AG04450 (cell line): ENCODE measurements at regions of chr5 and their contacts with region 1.

Region 1: GRCh38 chr5:98786191-98786853 is 12.9 kb downstream of the RGMB start:
- DNase-seq: no peak
- H3K4me3 ChIP-seq: no peak overlapping the region
- H3K27ac ChIP-seq: no peak overlapping the region
- H3K27me3 ChIP-seq: no peaks in the 10 kb centered on the region
- CTCF ChIP-seq: no peak

Region 2: DNA sequence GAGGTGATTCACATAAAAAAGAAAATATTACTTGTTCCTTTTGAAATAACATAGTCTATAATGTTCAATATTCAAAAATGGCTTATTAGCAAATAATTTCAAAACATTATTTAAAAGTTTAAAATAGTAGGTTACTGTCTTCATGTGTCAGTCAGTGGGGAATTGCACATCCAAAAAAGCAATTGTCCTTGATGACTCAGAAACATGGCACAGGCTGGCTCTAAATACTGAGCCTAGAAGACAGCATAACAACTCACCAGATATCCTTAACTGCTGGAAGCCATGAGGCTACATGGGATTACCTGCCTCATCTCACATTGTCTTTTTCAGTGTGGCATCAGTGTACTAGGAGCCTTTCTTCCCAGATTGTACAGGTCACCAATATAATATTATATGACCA is 452.4 kb before region 1 on chr5:
- CTCF ChIA-PET with region 1: interaction called, 12 read pairs
- POLR2A ChIA-PET with region 1: no interaction called
- DNase-seq: no peak
- H3K4me3 ChIP-seq: no peak overlapping the region
- H3K27ac ChIP-seq: no peak overlapping the region
- H3K27me3 ChIP-seq: no peaks in the 10 kb centered on the region
- CTCF ChIP-seq: no peak

Region 3: GRCh38 chr5:98735806-98736507 is 50.4 kb before region 1 on chr5:
- CTCF ChIA-PET with region 1: no interaction called
- POLR2A ChIA-PET with region 1: no interaction called
- DNase-seq: no peak
- H3K4me3 ChIP-seq: no peak overlapping the region
- H3K27ac ChIP-seq: no peak overlapping the region
- H3K27me3 ChIP-seq: no peaks in the 10 kb centered on the region
- CTCF ChIP-seq: no peak

Region 4: GRCh38 chr5:98905857-98906690 is 119.8 kb after region 1 on chr5:
- CTCF ChIA-PET with region 1: no interaction called
- POLR2A ChIA-PET with region 1: no interaction called
- DNase-seq: no peak
- H3K4me3 ChIP-seq: no peak overlapping the region
- H3K27ac ChIP-seq: no peak overlapping the region
- H3K27me3 ChIP-seq: no peaks in the 10 kb centered on the region
- CTCF ChIP-seq: peak; percentile 74